Activated CD4-positive, alpha-beta memory T cell treated with anti-CD3 and anti-CD28 coated beads for 36 hours (primary cell): ENCODE measurements at regions of chr14 and their contacts with region 1.

Region 1: GRCh38 chr14:70821584-70822529 is 12.5 kb upstream of the MAP3K9 start:
- DNase-seq: peak; percentile 80
- H3K4me3 Mint-ChIP-seq: peak overlapping the region; percentile 76
- H3K27ac Mint-ChIP-seq: no peak overlapping the region
- H3K4me1 Mint-ChIP-seq: peaks cover 12% of the 10 kb centered on the region
- H3K27me3 Mint-ChIP-seq: peaks cover 9% of the 10 kb centered on the region

Region 2: DNA sequence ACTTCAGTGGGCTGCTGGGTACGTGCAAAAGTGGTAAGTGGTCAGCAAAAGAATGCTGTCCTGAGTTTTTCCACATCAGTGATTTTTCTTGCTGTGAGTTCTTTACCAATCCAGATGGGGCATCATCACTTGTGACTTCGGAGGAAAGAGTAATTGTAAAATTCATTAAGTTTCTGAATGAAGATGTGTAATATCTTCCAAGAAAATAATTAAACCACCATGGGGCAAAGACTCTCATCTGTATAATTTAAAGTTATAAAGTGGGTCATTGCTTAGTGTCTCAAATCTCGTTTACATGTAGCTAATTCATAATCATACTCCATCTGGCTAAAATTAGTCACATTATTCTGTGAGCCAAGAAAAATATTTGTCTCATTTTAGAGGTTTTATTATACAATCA is 210.6 kb before region 1 on chr14:
- CTCF ChIA-PET with region 1: no interaction called
- POLR2A ChIA-PET with region 1: no interaction called
- intact Hi-C with region 1: no loop called
- DNase-seq: no peak
- H3K4me3 Mint-ChIP-seq: no peak overlapping the region
- H3K27ac Mint-ChIP-seq: no peak overlapping the region
- H3K4me1 Mint-ChIP-seq: no peaks in the 10 kb centered on the region
- H3K27me3 Mint-ChIP-seq: peaks cover 7% of the 10 kb centered on the region

Region 3: GRCh38 chr14:70714055-70714621 is 107.7 kb before region 1 on chr14:
- CTCF ChIA-PET with region 1: interaction called, 3 read pairs
- POLR2A ChIA-PET with region 1: no interaction called
- intact Hi-C with region 1: loop called (anchors 1 kb)
- DNase-seq: peak; percentile 32
- H3K4me3 Mint-ChIP-seq: no peak overlapping the region
- H3K27ac Mint-ChIP-seq: no peak overlapping the region
- H3K4me1 Mint-ChIP-seq: peaks cover 3% of the 10 kb centered on the region
- H3K27me3 Mint-ChIP-seq: no peaks in the 10 kb centered on the region

Region 4: DNA sequence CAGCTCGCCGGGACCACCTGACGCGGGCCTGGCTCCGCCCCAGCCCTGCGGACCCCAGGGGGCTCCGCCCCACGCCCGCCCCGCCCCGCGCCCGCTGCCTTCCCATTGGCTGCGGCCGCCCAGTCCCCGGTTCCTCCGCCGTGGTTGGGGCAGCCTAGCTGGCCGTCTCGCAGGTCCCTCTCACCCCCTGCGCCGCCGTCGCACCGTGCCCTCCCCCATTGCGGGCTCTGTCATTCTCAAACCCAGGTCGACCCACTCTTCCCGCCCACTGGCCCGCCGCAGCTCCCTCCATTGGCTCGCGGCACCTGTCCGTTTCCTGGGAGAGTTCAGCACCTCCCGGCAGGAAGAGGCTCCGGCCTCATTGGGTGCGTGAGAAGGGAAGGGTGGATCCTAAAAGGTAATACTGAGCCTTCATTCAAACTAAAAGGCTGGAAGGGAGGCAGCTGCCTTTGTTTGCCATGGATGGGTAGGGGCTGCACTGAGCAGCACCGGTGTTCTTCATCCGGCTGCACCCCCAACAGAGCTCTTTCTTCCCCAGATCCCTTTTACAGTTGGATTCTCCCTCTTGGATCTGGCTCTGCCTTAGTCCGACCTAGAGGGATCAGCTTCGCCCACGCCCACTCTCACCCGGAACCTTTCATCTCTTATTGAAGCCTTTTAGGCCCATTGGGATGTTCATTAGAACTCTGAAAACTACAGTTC is 12.2 kb before region 1 on chr14:
- CTCF ChIA-PET with region 1: interaction called, 10 read pairs
- POLR2A ChIA-PET with region 1: interaction called, 9 read pairs
- intact Hi-C with region 1: loop called (anchors 1 kb)
- DNase-seq: peak; percentile 96
- H3K4me3 Mint-ChIP-seq: no peak overlapping the region
- H3K27ac Mint-ChIP-seq: no peak overlapping the region
- H3K4me1 Mint-ChIP-seq: peaks cover 6% of the 10 kb centered on the region
- H3K27me3 Mint-ChIP-seq: no peaks in the 10 kb centered on the region

Region 5: GRCh38 chr14:70856851-70857495 is 35.1 kb after region 1 on chr14:
- CTCF ChIA-PET with region 1: interaction called, 3 read pairs
- POLR2A ChIA-PET with region 1: no interaction called
- intact Hi-C with region 1: loop called (anchors 2 kb)
- DNase-seq: peak; percentile 48
- H3K4me3 Mint-ChIP-seq: no peak overlapping the region
- H3K27ac Mint-ChIP-seq: no peak overlapping the region
- H3K4me1 Mint-ChIP-seq: peaks cover 11% of the 10 kb centered on the region
- H3K27me3 Mint-ChIP-seq: no peaks in the 10 kb centered on the region

Region 6: DNA sequence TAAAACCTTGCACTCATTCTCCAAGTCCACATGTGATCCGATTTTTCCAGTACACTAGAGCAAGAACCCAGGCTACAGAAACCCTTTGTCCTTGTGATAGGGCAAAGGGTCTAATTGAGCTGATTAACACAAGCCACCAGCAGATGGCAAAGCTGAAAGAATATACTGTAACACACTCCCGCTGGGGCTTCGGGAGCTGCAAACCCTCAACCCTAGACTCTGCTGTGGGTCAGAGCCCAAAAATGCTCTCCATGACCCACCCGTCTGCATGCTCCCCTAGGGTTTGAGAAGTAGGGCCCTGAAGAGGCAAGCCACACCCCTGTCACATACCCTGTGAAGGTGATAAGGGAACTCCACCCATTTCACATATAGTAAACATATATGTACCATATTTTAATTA is 51.8 kb after region 1 on chr14:
- CTCF ChIA-PET with region 1: interaction called, 10 read pairs
- POLR2A ChIA-PET with region 1: no interaction called
- intact Hi-C with region 1: no loop called
- DNase-seq: no peak
- H3K4me3 Mint-ChIP-seq: no peak overlapping the region
- H3K27ac Mint-ChIP-seq: no peak overlapping the region
- H3K4me1 Mint-ChIP-seq: peaks cover 19% of the 10 kb centered on the region
- H3K27me3 Mint-ChIP-seq: no peaks in the 10 kb centered on the region

Region 7: DNA sequence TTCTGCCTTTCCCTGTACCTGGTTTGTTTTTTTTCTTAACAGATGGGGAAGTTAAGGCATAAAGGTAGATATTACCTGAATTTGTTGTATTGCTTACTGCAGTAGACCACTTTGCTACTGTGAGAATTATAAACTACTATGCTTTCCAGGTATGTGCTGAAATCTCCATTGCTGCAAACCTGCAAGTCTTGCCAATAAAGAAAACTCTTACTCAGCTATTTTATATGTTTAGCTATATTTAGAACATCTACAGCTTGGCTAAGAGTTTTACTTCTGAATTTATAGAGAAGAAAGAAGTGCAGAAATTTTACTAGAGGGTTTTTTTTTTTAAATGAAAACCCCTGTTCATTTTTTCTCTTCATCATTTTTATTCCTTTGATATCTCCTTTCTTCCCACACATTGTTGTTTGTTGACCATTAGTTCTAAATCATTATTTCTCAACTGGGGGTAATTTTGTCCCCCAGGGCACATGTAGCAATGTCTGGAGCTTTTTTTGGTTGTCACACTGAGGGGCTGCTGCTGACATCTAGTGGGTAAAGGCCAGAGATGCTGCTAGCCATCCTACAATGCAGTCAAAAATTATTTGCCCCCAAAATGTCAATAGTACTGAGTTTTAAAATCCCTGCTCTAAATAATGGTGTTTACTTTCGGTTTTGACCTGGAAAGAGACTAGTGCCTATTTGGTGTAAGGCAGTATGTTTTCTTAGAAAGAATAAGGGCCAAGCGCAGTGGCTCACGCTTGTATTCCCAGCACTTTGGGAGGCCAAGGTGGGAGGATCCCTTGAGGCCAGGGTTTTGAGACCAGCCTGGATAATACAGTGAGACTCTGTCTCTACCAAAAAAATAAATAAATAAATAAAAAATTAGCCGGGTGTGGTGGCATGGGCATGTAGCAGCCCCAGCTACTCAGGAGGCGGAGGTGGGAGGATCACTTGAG is 134.0 kb after region 1 on chr14:
- CTCF ChIA-PET with region 1: interaction called, 57 read pairs
- POLR2A ChIA-PET with region 1: no interaction called
- intact Hi-C with region 1: loop called (anchors 1 kb)
- DNase-seq: peak; percentile 57
- H3K4me3 Mint-ChIP-seq: no peak overlapping the region
- H3K27ac Mint-ChIP-seq: no peak overlapping the region
- H3K4me1 Mint-ChIP-seq: peaks cover 45% of the 10 kb centered on the region
- H3K27me3 Mint-ChIP-seq: no peaks in the 10 kb centered on the region

Region 8: DNA sequence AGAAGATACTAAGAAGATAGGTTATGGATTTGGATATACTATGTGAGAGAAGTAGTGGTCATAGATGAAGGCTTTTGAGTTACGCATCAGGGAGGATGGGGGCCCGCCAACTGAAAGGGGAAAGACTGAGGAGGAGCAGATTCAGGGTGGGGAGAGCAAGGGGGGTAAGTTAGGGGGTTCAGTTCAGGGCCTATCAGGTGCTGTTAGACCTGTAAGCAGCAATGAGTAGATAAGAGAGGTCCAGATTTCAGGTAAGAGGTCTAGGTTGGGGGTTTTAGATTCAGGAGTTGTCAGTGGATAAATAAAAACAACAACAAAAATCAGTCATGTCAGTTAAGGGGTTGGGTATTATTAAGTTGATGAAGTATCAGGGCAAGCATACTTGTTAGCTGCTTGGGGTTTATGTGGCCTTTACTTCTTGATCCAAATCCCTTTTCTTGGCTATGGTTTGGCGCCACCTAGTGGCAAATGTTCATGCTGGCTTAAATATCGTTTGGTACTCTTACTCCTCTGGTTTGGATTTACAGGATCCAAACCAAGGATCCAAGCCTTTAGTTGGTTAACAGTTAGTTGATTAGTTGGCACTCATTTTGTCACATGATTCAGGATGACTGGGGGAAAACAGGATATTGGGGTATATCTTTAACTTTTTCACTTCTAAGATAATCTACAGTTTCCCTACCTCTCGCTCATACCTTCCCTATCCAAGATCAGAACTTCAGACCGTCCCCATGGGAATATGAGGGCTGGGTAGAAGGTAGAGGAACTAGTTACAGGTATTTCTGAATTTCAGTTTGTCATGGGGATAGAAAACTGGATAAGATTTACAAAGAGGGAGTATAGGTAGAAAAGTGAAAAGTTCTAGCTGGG is 150.5 kb after region 1 on chr14:
- CTCF ChIA-PET with region 1: interaction called, 42 read pairs
- POLR2A ChIA-PET with region 1: interaction called, 3 read pairs
- intact Hi-C with region 1: loop called (anchors 1 kb)
- DNase-seq: peak; percentile 88
- H3K4me3 Mint-ChIP-seq: no peak overlapping the region
- H3K27ac Mint-ChIP-seq: peak overlapping the region; percentile 11
- H3K4me1 Mint-ChIP-seq: peaks cover 36% of the 10 kb centered on the region
- H3K27me3 Mint-ChIP-seq: no peaks in the 10 kb centered on the region